ENCODE measurements at regions of chr1 and their contacts with region 1.

Region 1: DNA sequence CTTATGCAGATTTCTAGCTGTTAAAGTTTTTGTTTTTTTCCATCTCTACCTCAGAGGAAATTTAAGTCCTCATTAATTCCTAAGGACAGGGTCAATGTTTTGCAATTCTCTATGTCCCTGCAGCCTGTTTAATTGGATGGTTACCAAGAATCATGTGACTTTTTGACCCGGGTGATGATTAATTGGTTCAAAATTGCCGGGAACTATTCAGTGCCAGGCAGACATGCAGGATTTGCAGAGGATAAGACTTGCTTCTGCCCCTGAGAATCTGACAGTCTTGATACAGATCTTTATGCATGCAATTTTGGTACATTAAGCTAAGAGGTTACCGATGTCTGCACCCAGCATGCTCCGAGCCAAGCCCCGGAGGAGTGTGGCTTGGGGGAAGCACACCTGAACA is 87.9 kb downstream of the PLPP3 start:
- DNase-seq: no peak
- ATAC-seq: peak in 2 of 4 donors; percentile 40 to 41
- H3K4me3 ChIP-seq: no peak overlapping the region
- H3K27ac ChIP-seq: no peak overlapping the region
- H3K4me1 ChIP-seq: peaks cover 0 to 25% (median 12%) of the 10 kb centered on the region in 12 donors
- H3K27me3 ChIP-seq: no peaks in the 10 kb centered on the region
- CTCF ChIP-seq: no peak
- POLR2A ChIP-seq: no peak

Region 2: GRCh38 chr1:56456436-56457101 is 34.9 kb before region 1 on chr1:
- intact Hi-C with region 1: loop called in 1 of 10 experiments (anchors 1 kb)
- DNase-seq: peak in 1 of 5 donors; percentile 28
- ATAC-seq: peak in 3 of 4 donors; percentile 53 to 86 (median 65)
- H3K4me3 ChIP-seq: no peak overlapping the region
- H3K27ac ChIP-seq: peak overlapping the region in 4 of 12 donors; percentile 8 to 45 (median 30)
- H3K4me1 ChIP-seq: peaks cover 0 to 37% (median 15%) of the 10 kb centered on the region in 12 donors
- H3K27me3 ChIP-seq: no peaks in the 10 kb centered on the region
- CTCF ChIP-seq: no peak
- POLR2A ChIP-seq: no peak